Dorsolateral prefrontal cortex (tissue), 120 donors: ENCODE measurements at regions of chr3 and their contacts with region 1.

Region 1: GRCh38 chr3:9778143-9779074 is 8.7 kb upstream of the CAMK1 start:
- DNase-seq: peak in 4 of 10 donors; percentile 64 to 76 (median 72)
- H3K4me3 ChIP-seq: no peak overlapping the region
- H3K27ac ChIP-seq: peak overlapping the region in 49 of 59 donors; percentile 2 to 81 (median 52)
- H3K27me3 ChIP-seq: no peaks in the 10 kb centered on the region
- CTCF ChIP-seq: no peak

Region 2: DNA sequence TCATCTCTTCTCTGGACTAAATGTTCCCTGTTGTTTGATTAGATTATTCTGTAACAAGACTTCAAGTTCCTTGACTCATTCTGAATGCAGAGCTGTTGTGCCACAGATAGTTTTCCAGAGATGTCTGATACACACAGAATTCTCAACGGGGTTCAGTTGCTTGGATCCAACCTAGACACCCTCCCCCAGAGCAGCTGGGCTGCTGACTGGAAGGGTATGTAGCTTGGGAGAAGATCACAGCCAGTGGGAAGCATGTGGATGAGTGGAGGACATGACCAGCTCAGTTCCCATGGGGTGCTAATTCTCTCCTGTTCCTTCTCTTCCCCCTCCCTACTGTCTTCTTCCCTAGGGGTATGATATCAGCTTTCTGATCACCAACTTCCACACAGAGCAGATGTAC is 25.1 kb after region 1 on chr3:
- intact Hi-C with region 1: loop called in 1 of 2 experiments (anchors 1 kb)
- DNase-seq: peak in 7 of 10 donors; percentile 36 to 86 (median 69)
- H3K4me3 ChIP-seq: peak overlapping the region in 1 of 59 donors; percentile 3
- H3K27ac ChIP-seq: peak overlapping the region in 42 of 59 donors; percentile 2 to 83 (median 46)
- H3K27me3 ChIP-seq: no peaks in the 10 kb centered on the region
- CTCF ChIP-seq: no peak